ENCODE measurements at regions of chr18 and their contacts with region 1.

Region 1: DNA sequence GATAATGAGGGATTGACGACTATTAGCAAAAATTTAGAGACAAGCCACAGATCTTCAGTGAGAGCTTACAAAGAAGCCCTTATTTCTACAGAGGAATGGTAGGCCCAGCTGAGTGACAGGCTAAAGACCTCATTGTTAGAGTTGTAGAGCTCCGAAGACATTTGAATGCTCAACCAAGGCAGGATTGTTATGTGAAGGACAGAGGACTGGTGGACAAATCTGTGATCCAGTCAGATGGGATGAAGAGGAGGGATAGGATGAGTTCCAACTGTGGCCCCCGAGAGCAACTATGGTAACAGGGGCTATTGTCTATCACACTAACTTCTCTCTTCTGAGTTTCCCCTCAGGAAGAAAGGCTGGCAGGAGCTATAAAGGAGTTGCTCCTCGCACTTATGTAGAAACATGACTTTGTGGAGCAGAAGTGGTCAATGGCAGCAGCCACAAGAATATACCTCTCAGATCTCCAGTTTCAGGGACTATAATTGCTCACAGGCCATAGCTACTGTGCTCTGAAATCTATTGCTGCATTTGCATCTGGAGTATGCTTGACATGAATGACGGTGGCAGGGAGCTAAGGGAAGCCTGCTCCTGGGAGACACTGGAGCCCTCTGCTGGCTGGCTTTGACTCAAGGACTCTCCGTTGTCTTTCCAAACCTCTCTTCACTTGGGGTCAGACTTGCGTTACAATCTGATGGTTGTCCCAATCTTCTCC is 50.3 kb upstream of the GREB1L start:
- DNase-seq: no peak
- ATAC-seq: peak; percentile 54
- H3K4me3 ChIP-seq: no peak overlapping the region
- H3K27ac ChIP-seq: no peak overlapping the region
- H3K4me1 ChIP-seq: no peaks in the 10 kb centered on the region
- H3K27me3 ChIP-seq: no peaks in the 10 kb centered on the region
- CTCF ChIP-seq: peak; percentile 26 to 40 (median 33); a peak in 4 of 6 replicates
- EP300 ChIP-seq: no peak
- POLR2A ChIP-seq: no peak
- RAD21 ChIP-seq: peak; percentile 26; the same call in 1 of the 2 replicates

Region 2: DNA sequence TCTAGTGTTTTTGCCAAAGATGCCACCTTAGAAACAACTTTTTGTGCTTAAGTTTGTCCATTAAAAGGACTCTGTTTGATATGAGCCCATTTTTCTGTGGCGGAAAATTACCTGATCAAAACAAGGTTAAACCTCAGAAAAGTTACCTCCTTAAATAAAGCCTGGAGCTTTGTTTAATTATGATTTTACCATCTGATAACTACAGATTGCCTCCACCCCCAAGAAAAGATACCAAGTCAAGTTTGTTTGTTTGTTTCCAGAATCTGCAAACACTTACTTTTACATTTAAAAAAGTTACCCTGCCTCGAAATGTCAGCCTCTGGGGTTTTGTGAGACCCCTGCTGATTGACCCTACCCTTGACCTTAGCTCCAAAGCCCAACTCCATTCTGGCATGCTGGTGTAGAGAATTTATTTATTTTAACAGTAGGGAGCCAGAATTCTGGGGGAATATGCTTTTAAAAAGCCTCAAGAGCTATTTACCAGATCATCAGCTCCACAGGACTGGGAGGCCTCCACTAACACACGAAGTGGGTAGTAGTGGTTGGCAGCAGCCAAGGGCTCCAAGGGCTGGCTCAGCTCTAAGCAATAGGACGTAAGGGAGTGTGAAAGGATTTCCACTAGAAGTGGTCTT is 27.0 kb after region 1 on chr18:
- CTCF ChIA-PET with region 1: no interaction called
- POLR2A ChIA-PET with region 1: no interaction called
- RAD21 ChIA-PET with region 1: no interaction called
- SMC1A ChIA-PET with region 1: no interaction called
- in situ Hi-C with region 1: no loop called
- intact Hi-C with region 1: no loop called
- DNase-seq: no peak
- ATAC-seq: no peak
- H3K4me3 ChIP-seq: no peak overlapping the region
- H3K27ac ChIP-seq: no peak overlapping the region
- H3K4me1 ChIP-seq: no peaks in the 10 kb centered on the region
- H3K27me3 ChIP-seq: no peaks in the 10 kb centered on the region
- CTCF ChIP-seq: no peak
- EP300 ChIP-seq: no peak
- POLR2A ChIP-seq: no peak
- RAD21 ChIP-seq: no peak

Region 3: DNA sequence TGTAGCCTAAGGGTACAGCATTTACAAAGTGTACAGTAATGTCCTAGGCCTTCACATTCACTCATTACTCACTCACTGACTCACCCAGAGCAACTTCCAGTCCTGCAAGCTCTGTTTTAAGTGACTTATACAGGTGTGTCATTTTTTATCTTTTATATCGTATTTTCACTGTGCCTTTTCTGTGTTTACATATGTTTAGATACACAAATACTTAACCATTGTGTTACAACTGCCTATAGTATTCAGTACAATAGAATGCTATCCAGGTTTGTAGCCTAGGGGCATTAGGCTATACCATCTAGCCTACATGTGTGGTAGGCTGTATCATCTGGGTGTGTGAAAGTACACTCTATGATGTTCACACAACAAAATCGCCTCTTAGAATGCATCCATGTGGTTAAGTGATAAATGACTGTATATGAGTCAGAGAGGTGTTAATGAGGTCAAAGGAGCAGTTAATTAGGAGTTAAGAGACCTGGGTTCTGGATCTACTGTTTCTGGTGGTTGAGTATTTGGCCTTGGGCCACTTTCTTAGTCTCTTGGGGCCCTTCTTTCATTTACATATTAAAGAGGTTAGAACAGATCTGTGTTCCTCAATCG is 199.4 kb after region 1 on chr18:
- CTCF ChIA-PET with region 1: no interaction called
- POLR2A ChIA-PET with region 1: no interaction called
- RAD21 ChIA-PET with region 1: no interaction called
- SMC1A ChIA-PET with region 1: no interaction called
- in situ Hi-C with region 1: no loop called
- intact Hi-C with region 1: loop called (anchors 10 kb)
- DNase-seq: peak; percentile 35
- ATAC-seq: peak; percentile 95
- H3K4me3 ChIP-seq: no peak overlapping the region
- H3K27ac ChIP-seq: no peak overlapping the region
- H3K4me1 ChIP-seq: no peaks in the 10 kb centered on the region
- H3K27me3 ChIP-seq: no peaks in the 10 kb centered on the region
- CTCF ChIP-seq: no peak
- EP300 ChIP-seq: peak in 1 of 2 experiments; percentile 38; a peak in 1 of 4 replicates
- POLR2A ChIP-seq: no peak
- RAD21 ChIP-seq: no peak

Region 4: GRCh38 chr18:21444465-21445023 is 252.8 kb after region 1 on chr18:
- CTCF ChIA-PET with region 1: interaction called, 53 read pairs
- POLR2A ChIA-PET with region 1: interaction called, 10 read pairs
- RAD21 ChIA-PET with region 1: interaction called, 6 read pairs
- SMC1A ChIA-PET with region 1: interaction called, 19 read pairs
- in situ Hi-C with region 1: loop called (anchors 5 kb)
- intact Hi-C with region 1: loop called (anchors 1 kb)
- DNase-seq: no peak
- ATAC-seq: peak; percentile 77
- H3K4me3 ChIP-seq: no peak overlapping the region
- H3K27ac ChIP-seq: no peak overlapping the region
- H3K4me1 ChIP-seq: no peaks in the 10 kb centered on the region
- H3K27me3 ChIP-seq: no peaks in the 10 kb centered on the region; a peak in 2 of 4 replicates
- CTCF ChIP-seq: peak; percentile 58 to 67 (median 64)
- EP300 ChIP-seq: no peak
- POLR2A ChIP-seq: no peak
- RAD21 ChIP-seq: peak; percentile 71

Region 5: DNA sequence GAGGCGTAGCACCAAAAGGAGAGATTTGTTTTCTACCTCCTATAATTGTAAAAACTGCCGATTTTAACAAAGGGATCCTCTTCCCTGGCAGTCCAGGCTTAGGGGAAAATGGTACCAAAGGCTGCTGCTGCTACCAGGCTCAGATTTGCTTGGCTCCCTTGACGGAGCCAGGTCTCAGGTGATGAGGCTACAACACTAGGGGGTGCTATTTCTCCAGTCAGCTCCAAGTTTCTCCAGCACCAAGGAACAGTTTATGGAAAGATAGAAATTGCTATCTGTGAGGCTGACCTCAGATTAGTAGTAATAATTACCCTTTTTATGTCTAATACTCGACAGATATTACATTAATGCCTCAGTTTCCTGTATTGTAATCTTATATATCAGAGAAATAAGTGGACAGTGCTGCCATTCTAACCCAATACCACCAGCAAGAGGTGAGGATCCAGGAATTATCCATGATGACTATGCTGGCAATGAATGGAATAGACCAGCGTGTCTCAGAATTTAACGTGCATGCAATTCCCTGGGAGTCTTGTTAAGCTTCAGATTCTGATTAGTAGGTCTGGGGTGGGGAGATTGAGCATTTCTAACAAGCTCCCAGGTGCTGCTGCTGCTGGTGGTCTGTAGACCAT is 297.5 kb after region 1 on chr18:
- CTCF ChIA-PET with region 1: no interaction called
- POLR2A ChIA-PET with region 1: no interaction called
- RAD21 ChIA-PET with region 1: no interaction called
- SMC1A ChIA-PET with region 1: no interaction called
- in situ Hi-C with region 1: no loop called
- intact Hi-C with region 1: loop called (anchors 10 kb)
- DNase-seq: no peak
- ATAC-seq: peak; percentile 90
- H3K4me3 ChIP-seq: no peak overlapping the region
- H3K27ac ChIP-seq: no peak overlapping the region
- H3K4me1 ChIP-seq: no peaks in the 10 kb centered on the region
- H3K27me3 ChIP-seq: no peaks in the 10 kb centered on the region
- CTCF ChIP-seq: peak; percentile 73 to 76 (median 75)
- EP300 ChIP-seq: no peak
- POLR2A ChIP-seq: no peak
- RAD21 ChIP-seq: peak; percentile 73

Region 6: DNA sequence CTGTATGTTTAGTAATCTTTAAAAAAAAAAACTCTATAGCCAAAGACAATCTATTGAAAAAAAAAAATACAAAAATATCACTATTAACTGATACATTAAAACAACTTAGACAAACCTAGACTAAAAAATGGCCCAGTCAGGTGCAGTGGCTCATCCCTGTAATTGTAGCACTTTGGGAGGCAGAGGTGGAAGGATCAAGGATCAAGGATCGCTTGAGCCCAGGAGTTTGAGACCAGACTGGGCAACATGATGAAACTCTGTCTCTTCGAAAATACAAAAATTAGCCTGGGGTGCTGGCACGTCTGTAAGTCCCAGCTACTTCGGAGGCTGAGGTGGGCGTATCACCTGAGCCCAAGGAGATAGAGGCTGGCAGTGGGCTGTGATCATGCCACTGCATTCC is 392.6 kb after region 1 on chr18:
- CTCF ChIA-PET with region 1: no interaction called
- POLR2A ChIA-PET with region 1: no interaction called
- RAD21 ChIA-PET with region 1: no interaction called
- SMC1A ChIA-PET with region 1: no interaction called
- in situ Hi-C with region 1: no loop called
- intact Hi-C with region 1: loop called (anchors 10 kb)
- DNase-seq: no peak
- ATAC-seq: no peak
- H3K4me3 ChIP-seq: no peak overlapping the region
- H3K27ac ChIP-seq: no peak overlapping the region
- H3K4me1 ChIP-seq: no peaks in the 10 kb centered on the region
- H3K27me3 ChIP-seq: no peaks in the 10 kb centered on the region
- CTCF ChIP-seq: no peak
- EP300 ChIP-seq: no peak
- POLR2A ChIP-seq: no peak
- RAD21 ChIP-seq: no peak

Region 7: DNA sequence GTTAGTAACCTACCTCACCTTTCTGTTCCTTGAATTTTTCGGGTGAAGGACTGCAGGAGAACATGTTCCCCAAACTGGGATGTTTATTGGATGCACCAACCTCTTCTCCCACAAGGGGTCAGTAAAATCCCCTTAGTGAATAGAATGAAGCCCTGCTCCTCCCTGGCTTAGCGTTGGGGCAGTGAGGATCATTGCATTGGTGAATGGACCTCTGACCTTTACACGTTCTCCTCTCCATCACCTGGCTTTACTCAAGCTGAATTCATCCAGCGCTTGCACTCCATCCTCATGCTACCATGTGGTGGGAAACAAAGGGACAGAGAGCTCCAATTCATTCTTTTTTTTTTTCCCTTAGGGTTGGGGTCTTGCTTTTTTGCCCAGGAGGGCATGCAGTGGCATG is 706.1 kb after region 1 on chr18:
- CTCF ChIA-PET with region 1: no interaction called
- POLR2A ChIA-PET with region 1: no interaction called
- RAD21 ChIA-PET with region 1: no interaction called
- SMC1A ChIA-PET with region 1: no interaction called
- in situ Hi-C with region 1: no loop called
- intact Hi-C with region 1: loop called (anchors 10 kb)
- DNase-seq: no peak
- ATAC-seq: peak; percentile 89
- H3K4me3 ChIP-seq: no peak overlapping the region
- H3K27ac ChIP-seq: no peak overlapping the region
- H3K4me1 ChIP-seq: no peaks in the 10 kb centered on the region
- H3K27me3 ChIP-seq: no peaks in the 10 kb centered on the region; a peak in 2 of 4 replicates
- CTCF ChIP-seq: peak; percentile 71 to 80 (median 79)
- EP300 ChIP-seq: no peak
- POLR2A ChIP-seq: no peak
- RAD21 ChIP-seq: peak; percentile 81

Region 8: GRCh38 chr18:22703883-22704585 is 1512.3 kb after region 1 on chr18:
- CTCF ChIA-PET with region 1: no interaction called
- POLR2A ChIA-PET with region 1: no interaction called
- RAD21 ChIA-PET with region 1: no interaction called
- SMC1A ChIA-PET with region 1: no interaction called
- in situ Hi-C with region 1: no loop called
- intact Hi-C with region 1: loop called (anchors 10 kb)
- DNase-seq: no peak
- ATAC-seq: peak; percentile 93
- H3K4me3 ChIP-seq: no peak overlapping the region
- H3K27ac ChIP-seq: no peak overlapping the region
- H3K4me1 ChIP-seq: no peaks in the 10 kb centered on the region
- H3K27me3 ChIP-seq: no peaks in the 10 kb centered on the region
- CTCF ChIP-seq: peak; percentile 67 to 75 (median 74)
- EP300 ChIP-seq: no peak
- POLR2A ChIP-seq: no peak
- RAD21 ChIP-seq: peak; percentile 81

Measured in GM12878 (cell line).